Ovary (tissue), 10 donors: ENCODE measurements at regions of chr1 and their contacts with region 1.

Region 1: GRCh38 chr1:147545133-147545532 is 3.8 kb downstream of the BCL9 start:
- DNase-seq: no peak
- H3K4me3 ChIP-seq: no peak overlapping the region
- H3K27ac ChIP-seq: no peak overlapping the region
- H3K4me1 ChIP-seq: peaks cover 12% of the 10 kb centered on the region
- H3K27me3 ChIP-seq: no peaks in the 10 kb centered on the region
- CTCF ChIP-seq: no peak
- EP300 ChIP-seq: no peak
- POLR2A ChIP-seq: no peak

Region 2: DNA sequence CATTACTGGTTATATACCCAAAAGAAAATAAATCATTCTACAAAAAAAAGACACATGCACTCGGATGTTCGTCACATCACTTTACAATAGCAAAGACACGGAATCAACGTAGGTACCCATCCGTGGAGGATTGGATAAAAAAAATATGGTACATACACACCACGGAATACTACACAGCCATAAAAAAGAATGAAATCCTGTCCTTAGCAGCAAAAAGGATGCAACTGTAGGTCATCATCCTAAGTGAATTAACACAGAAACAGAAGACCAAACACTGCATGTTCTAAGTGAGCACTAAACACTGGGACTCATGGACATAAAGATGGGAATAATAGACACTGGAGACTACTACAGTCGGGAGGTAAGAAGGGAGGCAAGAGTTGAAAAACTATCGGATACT is 154.0 kb before region 1 on chr1:
- intact Hi-C with region 1: no loop called
- DNase-seq: no peak
- H3K4me3 ChIP-seq: no peak overlapping the region
- H3K27ac ChIP-seq: no peak overlapping the region
- H3K4me1 ChIP-seq: no peaks in the 10 kb centered on the region
- H3K27me3 ChIP-seq: no peaks in the 10 kb centered on the region
- CTCF ChIP-seq: no peak
- EP300 ChIP-seq: no peak
- POLR2A ChIP-seq: no peak

Region 3: DNA sequence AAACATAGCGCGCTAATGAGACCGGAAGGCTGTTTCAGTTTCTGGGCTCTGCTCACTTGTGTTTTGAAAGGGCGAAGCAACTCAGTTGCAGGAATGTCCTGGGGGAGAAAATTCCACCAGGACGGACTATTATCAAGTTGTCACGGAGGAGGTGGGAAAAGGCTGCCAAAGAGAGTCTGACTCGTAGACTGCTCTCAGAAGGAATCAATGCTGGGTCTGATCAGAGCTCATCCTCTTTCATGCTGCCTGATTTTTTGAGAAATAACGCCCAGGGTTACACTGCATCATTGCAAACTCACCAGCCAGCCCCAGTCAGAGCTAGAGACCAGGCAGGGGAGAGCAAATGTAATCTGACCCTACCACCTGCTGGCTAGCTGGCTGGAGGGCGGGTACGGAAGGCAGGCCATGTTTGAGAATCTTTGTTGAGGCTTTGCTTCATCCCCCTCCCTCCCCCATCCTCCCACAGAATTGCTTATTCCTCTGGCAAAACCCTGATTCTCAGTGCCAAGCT is 40.3 kb before region 1 on chr1:
- intact Hi-C with region 1: loop called in 1 of 4 experiments (anchors 5 kb)
- DNase-seq: peak; percentile 48 to 73 (median 63)
- H3K4me3 ChIP-seq: peak overlapping the region; percentile 15
- H3K27ac ChIP-seq: peak overlapping the region in 1 of 2 donors; percentile 51
- H3K4me1 ChIP-seq: no peaks in the 10 kb centered on the region
- H3K27me3 ChIP-seq: no peaks in the 10 kb centered on the region
- CTCF ChIP-seq: no peak
- EP300 ChIP-seq: no peak
- POLR2A ChIP-seq: no peak

Region 4: GRCh38 chr1:147585640-147586383 is 40.7 kb after region 1 on chr1:
- intact Hi-C with region 1: loop called in 1 of 4 experiments (anchors 5 kb)
- DNase-seq: no peak
- H3K4me3 ChIP-seq: no peak overlapping the region
- H3K27ac ChIP-seq: no peak overlapping the region
- H3K4me1 ChIP-seq: no peaks in the 10 kb centered on the region
- H3K27me3 ChIP-seq: no peaks in the 10 kb centered on the region
- CTCF ChIP-seq: no peak
- EP300 ChIP-seq: no peak
- POLR2A ChIP-seq: no peak

Region 5: GRCh38 chr1:147599362-147600118 is 54.4 kb after region 1 on chr1:
- intact Hi-C with region 1: loop called in 3 of 4 experiments (anchors 2 to 5 kb)
- DNase-seq: peak; percentile 97 to 99 (median 98)
- H3K4me3 ChIP-seq: peak overlapping the region; percentile 80
- H3K27ac ChIP-seq: peak overlapping the region; percentile 69 to 98
- H3K4me1 ChIP-seq: peaks cover 8% of the 10 kb centered on the region
- H3K27me3 ChIP-seq: no peaks in the 10 kb centered on the region
- CTCF ChIP-seq: peak in 1 of 3 donors; percentile 21
- EP300 ChIP-seq: no peak
- POLR2A ChIP-seq: peak; percentile 94